ENCODE measurements at regions of chr5 and their contacts with region 1.

Region 1: DNA sequence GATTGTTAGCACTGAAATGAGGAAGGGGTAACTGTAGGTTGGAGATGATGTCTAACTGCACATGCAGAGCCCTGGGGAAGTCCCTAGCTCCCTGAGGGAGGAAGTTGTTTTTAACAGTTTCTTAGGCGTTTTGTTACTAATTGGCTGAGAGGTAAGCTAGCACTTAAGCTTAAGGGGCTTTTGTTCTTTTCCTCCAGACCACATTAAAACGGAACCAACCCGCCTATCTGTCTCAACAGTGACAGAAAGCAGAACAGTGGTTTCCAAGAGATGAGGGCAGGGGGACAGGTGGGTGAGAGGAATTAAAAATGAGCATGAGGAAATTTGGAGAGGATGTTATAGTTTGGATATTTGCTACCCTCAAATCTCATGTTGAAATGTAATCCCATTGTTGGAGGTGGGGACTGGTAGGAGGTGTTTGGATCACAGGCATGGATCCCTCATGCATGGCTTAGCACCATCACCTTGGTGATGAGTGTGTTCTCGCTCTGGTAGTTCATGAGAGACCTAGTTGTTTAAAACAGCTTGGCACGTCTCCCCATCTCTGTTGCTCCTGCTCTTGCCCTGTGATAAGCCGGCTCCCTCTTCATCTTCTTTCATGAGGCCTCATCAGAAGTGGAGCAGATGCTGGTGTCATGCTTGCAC is 38.9 kb downstream of the LYRM7 start:
- DNase-seq: peak; percentile 14 to 93 (median 55)
- ATAC-seq: peak; percentile 94
- H3K4me3 ChIP-seq: peak overlapping the region; percentile 2 to 13
- H3K4me3 Mint-ChIP-seq: peak overlapping the region; percentile 72
- H3K27ac ChIP-seq: peak overlapping the region; percentile 51 to 83
- H3K27ac Mint-ChIP-seq: peak overlapping the region; percentile 97
- H3K4me1 ChIP-seq: peaks cover 61% of the 10 kb centered on the region
- H3K4me1 Mint-ChIP-seq: peaks cover 60% of the 10 kb centered on the region
- H3K27me3 ChIP-seq: no peaks in the 10 kb centered on the region
- H3K27me3 Mint-ChIP-seq: no peaks in the 10 kb centered on the region
- CTCF ChIP-seq: no peak

Region 2: GRCh38 chr5:131005963-131006684 is 203.5 kb before region 1 on chr5:
- CTCF ChIA-PET with region 1: no interaction called
- POLR2A ChIA-PET with region 1: no interaction called
- intact Hi-C with region 1: no loop called
- DNase-seq: no peak
- ATAC-seq: no peak
- H3K4me3 ChIP-seq: no peak overlapping the region
- H3K4me3 Mint-ChIP-seq: no peak overlapping the region
- H3K27ac ChIP-seq: no peak overlapping the region
- H3K27ac Mint-ChIP-seq: no peak overlapping the region
- H3K4me1 ChIP-seq: no peaks in the 10 kb centered on the region
- H3K4me1 Mint-ChIP-seq: no peaks in the 10 kb centered on the region
- H3K27me3 ChIP-seq: no peaks in the 10 kb centered on the region
- H3K27me3 Mint-ChIP-seq: peaks cover 3% of the 10 kb centered on the region
- CTCF ChIP-seq: no peak

Region 3: DNA sequence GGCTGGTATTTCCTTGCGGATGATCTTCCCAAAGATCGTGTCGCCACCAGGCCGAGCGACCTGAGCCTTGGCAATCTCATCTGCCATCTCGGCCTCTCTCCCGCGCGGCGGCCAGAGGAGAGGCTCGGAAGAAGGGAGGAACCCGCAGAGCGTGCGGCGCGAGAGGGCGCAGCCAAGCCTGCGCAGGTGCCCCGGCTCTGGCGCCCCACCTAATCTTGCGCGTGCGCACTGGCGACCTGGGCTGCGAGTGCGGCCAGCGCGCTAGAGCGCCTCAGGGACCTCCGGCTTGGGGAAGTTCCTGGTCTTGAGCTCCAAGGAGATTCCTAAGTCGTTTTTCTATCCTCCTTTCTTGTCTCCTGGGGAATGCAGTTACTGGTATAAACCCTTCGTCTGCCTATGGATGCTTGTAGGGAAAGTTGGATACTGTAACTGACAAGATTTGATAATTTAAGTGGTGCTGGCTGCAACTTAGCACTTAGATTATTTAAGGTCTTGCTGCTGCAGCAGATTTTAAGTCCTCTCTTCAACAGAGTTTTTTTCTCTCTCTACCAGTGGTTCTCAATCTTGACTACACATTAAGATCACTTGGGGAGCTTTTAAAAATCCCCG is 44.4 kb before region 1 on chr5 and contains the start of gene HINT1:
- CTCF ChIA-PET with region 1: no interaction called
- POLR2A ChIA-PET with region 1: interaction called, 3 read pairs
- intact Hi-C with region 1: loop called (anchors 2 kb)
- DNase-seq: peak; percentile 81 to 96 (median 93)
- ATAC-seq: peak; percentile 83
- H3K4me3 ChIP-seq: peak within 1 kb of the TSS; percentile 85 to 90
- H3K4me3 Mint-ChIP-seq: peak within 1 kb of the TSS; percentile 95
- H3K27ac ChIP-seq: peak within 1 kb of the TSS; percentile 85 to 91
- H3K27ac Mint-ChIP-seq: peak within 1 kb of the TSS; percentile 98
- H3K4me1 ChIP-seq: peaks cover 40% of the 10 kb centered on the region
- H3K4me1 Mint-ChIP-seq: peaks cover 49% of the 10 kb centered on the region
- H3K27me3 ChIP-seq: no peaks in the 10 kb centered on the region
- H3K27me3 Mint-ChIP-seq: no peaks in the 10 kb centered on the region
- CTCF ChIP-seq: no peak
- total RNA-seq, gene HINT1: 243 to 252 TPM

Region 4: GRCh38 chr5:131170540-131171275 is 38.9 kb before region 1 on chr5 and contains the start of gene LYRM7:
- CTCF ChIA-PET with region 1: no interaction called
- POLR2A ChIA-PET with region 1: interaction called, 3 read pairs
- intact Hi-C with region 1: loop called (anchors 2 kb)
- DNase-seq: peak; percentile 89 to 99 (median 93)
- ATAC-seq: peak; percentile 95
- H3K4me3 ChIP-seq: peak within 1 kb of the TSS; percentile 64 to 76
- H3K4me3 Mint-ChIP-seq: peak within 1 kb of the TSS; percentile 100
- H3K27ac ChIP-seq: peak within 1 kb of the TSS; percentile 73 to 81
- H3K27ac Mint-ChIP-seq: peak within 1 kb of the TSS; percentile 99
- H3K4me1 ChIP-seq: peaks cover 22% of the 10 kb centered on the region
- H3K4me1 Mint-ChIP-seq: peaks cover 45% of the 10 kb centered on the region
- H3K27me3 ChIP-seq: no peaks in the 10 kb centered on the region
- H3K27me3 Mint-ChIP-seq: no peaks in the 10 kb centered on the region
- CTCF ChIP-seq: no peak
- total RNA-seq, gene LYRM7: 8.7 to 8.9 TPM

Measured in CD8-positive, alpha-beta T cell (primary cell).